Gastrocnemius medialis (tissue), 4 donors: ENCODE measurements at regions of chr3 and their contacts with region 1.

Region 1: GRCh38 chr3:18444595-18445400 is 19.7 kb upstream of the SATB1 start:
- DNase-seq: peak in 1 of 2 donors; percentile 25
- ATAC-seq: peak; percentile 93 to 94
- H3K4me3 ChIP-seq: peak overlapping the region; percentile 64 to 72 (median 68)
- H3K27ac ChIP-seq: peak overlapping the region in 2 of 4 donors; percentile 5 to 41
- H3K4me1 ChIP-seq: peaks cover 9 to 22% of the 10 kb centered on the region in 2 donors
- H3K27me3 ChIP-seq: peaks cover 29 to 42% (median 33%) of the 10 kb centered on the region in 3 donors
- CTCF ChIP-seq: peak in 4 of 5 experiments; percentile 57 to 77 (median 68)
- POLR2A ChIP-seq: no peak

Region 2: DNA sequence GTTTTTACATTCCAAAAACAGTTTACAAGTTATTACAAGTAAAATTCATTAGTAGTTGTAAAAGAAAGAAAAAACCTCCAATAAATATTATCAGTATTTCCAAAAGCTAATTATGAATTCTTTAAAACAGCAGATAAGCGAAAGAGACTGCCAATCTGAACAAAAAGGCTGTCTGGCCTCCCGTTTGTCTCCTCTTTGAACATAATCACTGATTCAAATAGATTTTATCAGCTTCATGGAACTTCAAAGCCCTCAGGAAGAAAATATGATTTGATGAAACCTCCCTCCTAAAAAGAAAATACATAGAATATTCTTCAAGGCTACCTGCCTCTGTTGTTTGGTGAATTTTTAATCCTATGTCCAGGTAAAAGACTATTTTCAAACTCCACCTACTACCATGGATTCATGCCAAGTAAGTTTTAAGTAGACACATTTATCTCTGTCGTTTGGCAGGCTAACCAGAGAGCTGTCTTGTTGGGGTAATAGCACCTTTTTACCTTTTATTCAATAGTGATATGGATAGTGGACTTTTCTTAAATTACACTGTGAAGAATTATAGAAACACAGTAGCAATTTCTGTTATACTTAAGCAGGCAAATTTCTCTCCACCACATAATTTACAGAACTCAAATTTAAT is 54.7 kb before region 1 on chr3:
- in situ Hi-C with region 1: no loop called
- intact Hi-C with region 1: loop called (anchors 2 kb)
- DNase-seq: no peak
- ATAC-seq: no peak
- H3K4me3 ChIP-seq: no peak overlapping the region
- H3K27ac ChIP-seq: no peak overlapping the region
- H3K4me1 ChIP-seq: no peaks in the 10 kb centered on the region
- H3K27me3 ChIP-seq: no peaks in the 10 kb centered on the region
- CTCF ChIP-seq: no peak
- POLR2A ChIP-seq: no peak

Region 3: GRCh38 chr3:18424729-18425640 is 19.8 kb before region 1 on chr3 and contains the start of gene SATB1:
- in situ Hi-C with region 1: no loop called
- intact Hi-C with region 1: loop called (anchors 2 kb)
- DNase-seq: peak; percentile 74 to 75
- ATAC-seq: peak; percentile 75 to 81
- H3K4me3 ChIP-seq: peak within 1 kb of the TSS; percentile 78 to 98 (median 92)
- H3K27ac ChIP-seq: peak within 1 kb of the TSS; percentile 91 to 99 (median 95)
- H3K4me1 ChIP-seq: peaks cover 22 to 29% of the 10 kb centered on the region in 2 donors
- H3K27me3 ChIP-seq: no peaks in the 10 kb centered on the region
- CTCF ChIP-seq: peak in 1 of 5 experiments; percentile 6
- POLR2A ChIP-seq: peak; percentile 62 to 83
- total RNA-seq, gene SATB1: 40.9 to 69.6 (median 41.7) TPM

Region 4: DNA sequence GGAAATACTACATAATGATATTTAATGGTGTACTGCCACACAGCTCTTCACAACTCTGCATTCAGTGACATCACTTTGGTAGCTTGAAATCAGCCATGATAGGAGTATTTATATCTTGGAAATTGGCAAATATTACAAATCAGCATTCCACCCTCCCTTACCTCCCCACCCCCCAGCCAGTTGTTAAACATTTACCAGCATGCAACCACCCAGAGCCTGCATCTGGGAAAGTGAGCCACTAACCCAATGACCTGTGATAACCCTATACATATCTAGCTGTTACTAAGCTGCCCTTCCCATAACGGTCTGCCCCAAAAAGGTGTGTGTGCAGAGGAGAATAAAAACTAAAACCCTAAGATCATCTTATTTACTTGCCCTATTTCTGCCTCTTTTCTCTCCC is 25.0 kb after region 1 on chr3:
- in situ Hi-C with region 1: no loop called
- intact Hi-C with region 1: no loop called
- DNase-seq: no peak
- ATAC-seq: no peak
- H3K4me3 ChIP-seq: no peak overlapping the region
- H3K27ac ChIP-seq: no peak overlapping the region
- H3K4me1 ChIP-seq: no peaks in the 10 kb centered on the region
- H3K27me3 ChIP-seq: no peaks in the 10 kb centered on the region
- CTCF ChIP-seq: no peak
- POLR2A ChIP-seq: no peak